PC-9 (cell line): ENCODE measurements at regions of chr12 and their contacts with region 1.

Region 1: GRCh38 chr12:10235761-10236631 is 23.3 kb downstream of the GABARAPL1 start:
- DNase-seq: peak; percentile 32 to 43
- H3K4me3 ChIP-seq: no peak overlapping the region
- H3K27ac ChIP-seq: no peak overlapping the region
- H3K4me1 ChIP-seq: no peaks in the 10 kb centered on the region
- H3K27me3 ChIP-seq: no peaks in the 10 kb centered on the region
- CTCF ChIP-seq: peak; percentile 96

Region 2: DNA sequence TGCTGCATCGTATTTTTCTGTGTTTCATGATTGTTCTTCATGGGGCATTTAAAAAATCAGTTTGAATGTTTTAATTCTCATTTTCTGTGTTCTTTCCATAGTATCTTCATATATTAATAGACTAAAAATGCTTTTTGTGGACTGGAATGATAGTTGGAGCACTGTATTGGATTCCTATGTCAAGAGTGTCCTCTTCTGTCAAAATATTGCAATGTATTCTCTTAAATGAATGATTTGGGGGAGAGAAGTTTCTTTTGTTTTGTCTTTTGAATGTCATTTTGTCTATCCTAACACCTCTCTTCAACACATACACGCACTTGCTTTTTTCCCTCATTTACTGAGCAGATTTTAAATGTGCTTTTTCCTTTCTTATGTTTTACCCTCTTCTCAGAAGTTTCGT is 265.0 kb after region 1 on chr12:
- CTCF ChIA-PET with region 1: no interaction called
- POLR2A ChIA-PET with region 1: no interaction called
- intact Hi-C with region 1: loop called (anchors 2 kb)
- DNase-seq: no peak
- H3K4me3 ChIP-seq: no peak overlapping the region
- H3K27ac ChIP-seq: no peak overlapping the region
- H3K4me1 ChIP-seq: no peaks in the 10 kb centered on the region
- H3K27me3 ChIP-seq: no peaks in the 10 kb centered on the region
- CTCF ChIP-seq: peak; percentile 34; the same call in 1 of the 2 replicates

Region 3: GRCh38 chr12:10562306-10562933 is 326.4 kb after region 1 on chr12:
- CTCF ChIA-PET with region 1: interaction called, 8 read pairs
- POLR2A ChIA-PET with region 1: no interaction called
- intact Hi-C with region 1: loop called (anchors 1 kb)
- DNase-seq: peak in 1 of 2 experiments; percentile 28
- H3K4me3 ChIP-seq: no peak overlapping the region
- H3K27ac ChIP-seq: no peak overlapping the region
- H3K4me1 ChIP-seq: no peaks in the 10 kb centered on the region
- H3K27me3 ChIP-seq: no peaks in the 10 kb centered on the region
- CTCF ChIP-seq: peak; percentile 87

Region 4: GRCh38 chr12:11486623-11487444 is 1250.8 kb after region 1 on chr12:
- CTCF ChIA-PET with region 1: interaction called, 3 read pairs
- POLR2A ChIA-PET with region 1: no interaction called
- intact Hi-C with region 1: loop called (anchors 1 kb)
- DNase-seq: peak; percentile 66 to 71
- H3K4me3 ChIP-seq: no peak overlapping the region
- H3K27ac ChIP-seq: no peak overlapping the region
- H3K4me1 ChIP-seq: peaks cover 12% of the 10 kb centered on the region
- H3K27me3 ChIP-seq: no peaks in the 10 kb centered on the region
- CTCF ChIP-seq: peak; percentile 99